ENCODE measurements at regions of chr1 and their contacts with region 1.

Region 1: GRCh38 chr1:235328357-235329138 is at the start of gene GGPS1:
- DNase-seq: peak; percentile 96 to 99 (median 99)
- ATAC-seq: peak; percentile 76
- H3K4me3 ChIP-seq: peak within 1 kb of the TSS; percentile 83 to 94
- H3K4me3 Mint-ChIP-seq: no peak within 1 kb of the TSS
- H3K27ac ChIP-seq: peak within 1 kb of the TSS; percentile 91 to 97
- H3K27ac Mint-ChIP-seq: no peak within 1 kb of the TSS
- H3K4me1 ChIP-seq: peaks cover 59% of the 10 kb centered on the region
- H3K4me1 Mint-ChIP-seq: peaks cover 55% of the 10 kb centered on the region
- H3K27me3 ChIP-seq: no peaks in the 10 kb centered on the region
- H3K27me3 Mint-ChIP-seq: no peaks in the 10 kb centered on the region
- CTCF ChIP-seq: no peak
- total RNA-seq, gene GGPS1: 18.2 to 21.3 TPM

Region 2: GRCh38 chr1:235128456-235129328 is 199.9 kb before region 1 on chr1 and contains the start of gene TOMM20:
- CTCF ChIA-PET with region 1: no interaction called
- POLR2A ChIA-PET with region 1: interaction called, 3 read pairs
- intact Hi-C with region 1: loop called (anchors 1 to 2 kb)
- DNase-seq: peak; percentile 88 to 98 (median 91)
- ATAC-seq: peak; percentile 88
- H3K4me3 ChIP-seq: peak within 1 kb of the TSS; percentile 83 to 98
- H3K4me3 Mint-ChIP-seq: peak within 1 kb of the TSS; percentile 88
- H3K27ac ChIP-seq: peak within 1 kb of the TSS; percentile 92 to 95
- H3K27ac Mint-ChIP-seq: peak within 1 kb of the TSS; percentile 93
- H3K4me1 ChIP-seq: peaks cover 36% of the 10 kb centered on the region
- H3K4me1 Mint-ChIP-seq: peaks cover 44% of the 10 kb centered on the region
- H3K27me3 ChIP-seq: no peaks in the 10 kb centered on the region
- H3K27me3 Mint-ChIP-seq: no peaks in the 10 kb centered on the region
- CTCF ChIP-seq: no peak
- total RNA-seq, gene TOMM20: 165 to 166 TPM

Region 3: GRCh38 chr1:235229868-235230267 is 98.7 kb before region 1 on chr1:
- CTCF ChIA-PET with region 1: no interaction called
- POLR2A ChIA-PET with region 1: no interaction called
- intact Hi-C with region 1: no loop called
- DNase-seq: no peak
- ATAC-seq: no peak
- H3K4me3 ChIP-seq: no peak overlapping the region
- H3K4me3 Mint-ChIP-seq: no peak overlapping the region
- H3K27ac ChIP-seq: no peak overlapping the region
- H3K27ac Mint-ChIP-seq: no peak overlapping the region
- H3K4me1 ChIP-seq: no peaks in the 10 kb centered on the region
- H3K4me1 Mint-ChIP-seq: peaks cover 6% of the 10 kb centered on the region
- H3K27me3 ChIP-seq: no peaks in the 10 kb centered on the region
- H3K27me3 Mint-ChIP-seq: no peaks in the 10 kb centered on the region
- CTCF ChIP-seq: no peak

Region 4: GRCh38 chr1:235290740-235291502 is 37.6 kb before region 1 on chr1:
- CTCF ChIA-PET with region 1: interaction called, 3 read pairs
- POLR2A ChIA-PET with region 1: interaction called, 3 read pairs
- intact Hi-C with region 1: loop called (anchors 2 to 5 kb)
- DNase-seq: no peak
- ATAC-seq: no peak
- H3K4me3 ChIP-seq: no peak overlapping the region
- H3K4me3 Mint-ChIP-seq: no peak overlapping the region
- H3K27ac ChIP-seq: no peak overlapping the region
- H3K27ac Mint-ChIP-seq: no peak overlapping the region
- H3K4me1 ChIP-seq: peaks cover 49% of the 10 kb centered on the region
- H3K4me1 Mint-ChIP-seq: peaks cover 72% of the 10 kb centered on the region
- H3K27me3 ChIP-seq: no peaks in the 10 kb centered on the region
- H3K27me3 Mint-ChIP-seq: no peaks in the 10 kb centered on the region
- CTCF ChIP-seq: no peak

Region 5: DNA sequence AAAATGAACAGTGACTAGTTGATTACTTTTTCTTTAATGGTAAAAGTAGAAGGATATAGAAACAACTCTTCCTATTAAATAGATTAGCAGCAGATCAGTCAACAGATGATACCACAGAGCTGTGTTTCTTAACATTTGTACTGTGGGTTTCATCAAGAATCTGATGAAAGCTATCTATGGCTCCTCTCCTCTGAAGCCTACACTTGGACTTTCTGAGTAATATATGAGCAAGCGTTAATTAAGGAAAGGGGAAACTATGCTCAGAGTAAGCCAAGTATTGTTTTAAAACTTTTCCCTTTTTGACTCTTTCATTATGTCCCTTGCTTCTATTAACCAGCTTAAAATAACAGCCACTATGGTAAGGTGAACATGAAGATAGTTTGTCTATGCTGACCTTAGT is 11.4 kb before region 1 on chr1:
- CTCF ChIA-PET with region 1: no interaction called
- POLR2A ChIA-PET with region 1: interaction called, 5 read pairs
- intact Hi-C with region 1: loop called in 1 of 2 experiments (anchors 1 kb)
- DNase-seq: no peak
- ATAC-seq: no peak
- H3K4me3 ChIP-seq: no peak overlapping the region
- H3K4me3 Mint-ChIP-seq: no peak overlapping the region
- H3K27ac ChIP-seq: no peak overlapping the region
- H3K27ac Mint-ChIP-seq: no peak overlapping the region
- H3K4me1 ChIP-seq: peaks cover 64% of the 10 kb centered on the region
- H3K4me1 Mint-ChIP-seq: peaks cover 80% of the 10 kb centered on the region
- H3K27me3 ChIP-seq: no peaks in the 10 kb centered on the region
- H3K27me3 Mint-ChIP-seq: no peaks in the 10 kb centered on the region
- CTCF ChIP-seq: no peak

Region 6: GRCh38 chr1:235504496-235505222 is 176.1 kb after region 1 on chr1:
- CTCF ChIA-PET with region 1: no interaction called
- POLR2A ChIA-PET with region 1: no interaction called
- intact Hi-C with region 1: loop called (anchors 1 to 2 kb)
- DNase-seq: peak; percentile 97 to 99 (median 98)
- ATAC-seq: peak; percentile 87
- H3K4me3 ChIP-seq: peak overlapping the region; percentile 81 to 85
- H3K4me3 Mint-ChIP-seq: peak overlapping the region; percentile 91
- H3K27ac ChIP-seq: peak overlapping the region; percentile 87 to 89
- H3K27ac Mint-ChIP-seq: peak overlapping the region; percentile 98
- H3K4me1 ChIP-seq: peaks cover 7% of the 10 kb centered on the region
- H3K4me1 Mint-ChIP-seq: peaks cover 26% of the 10 kb centered on the region
- H3K27me3 ChIP-seq: no peaks in the 10 kb centered on the region
- H3K27me3 Mint-ChIP-seq: no peaks in the 10 kb centered on the region
- CTCF ChIP-seq: peak; percentile 91

Region 7: GRCh38 chr1:236603991-236604904 is 1275.7 kb after region 1 on chr1 and contains the start of gene HEATR1:
- CTCF ChIA-PET with region 1: no interaction called
- POLR2A ChIA-PET with region 1: no interaction called
- intact Hi-C with region 1: loop called in 1 of 2 experiments (anchors 5 kb)
- DNase-seq: peak; percentile 62 to 94 (median 82)
- ATAC-seq: peak; percentile 86
- H3K4me3 ChIP-seq: peak within 1 kb of the TSS; percentile 90 to 93
- H3K4me3 Mint-ChIP-seq: peak within 1 kb of the TSS; percentile 96
- H3K27ac ChIP-seq: peak within 1 kb of the TSS; percentile 65 to 77
- H3K27ac Mint-ChIP-seq: peak within 1 kb of the TSS; percentile 98
- H3K4me1 ChIP-seq: peaks cover 23% of the 10 kb centered on the region
- H3K4me1 Mint-ChIP-seq: peaks cover 39% of the 10 kb centered on the region
- H3K27me3 ChIP-seq: peaks cover 0 to 3% of the 10 kb centered on the region in 2 experiments
- H3K27me3 Mint-ChIP-seq: peaks cover 11% of the 10 kb centered on the region
- CTCF ChIP-seq: no peak
- total RNA-seq, gene HEATR1: 52.1 to 53.7 TPM